Right ventricle myocardium superior (tissue), 1 donor: ENCODE measurements at regions of chr21 and their contacts with region 1.

Region 1: GRCh38 chr21:32826329-32827167 is 55.0 kb upstream of the PAXBP1 start:
- DNase-seq: no peak
- ATAC-seq: peak; percentile 90

Region 2: DNA sequence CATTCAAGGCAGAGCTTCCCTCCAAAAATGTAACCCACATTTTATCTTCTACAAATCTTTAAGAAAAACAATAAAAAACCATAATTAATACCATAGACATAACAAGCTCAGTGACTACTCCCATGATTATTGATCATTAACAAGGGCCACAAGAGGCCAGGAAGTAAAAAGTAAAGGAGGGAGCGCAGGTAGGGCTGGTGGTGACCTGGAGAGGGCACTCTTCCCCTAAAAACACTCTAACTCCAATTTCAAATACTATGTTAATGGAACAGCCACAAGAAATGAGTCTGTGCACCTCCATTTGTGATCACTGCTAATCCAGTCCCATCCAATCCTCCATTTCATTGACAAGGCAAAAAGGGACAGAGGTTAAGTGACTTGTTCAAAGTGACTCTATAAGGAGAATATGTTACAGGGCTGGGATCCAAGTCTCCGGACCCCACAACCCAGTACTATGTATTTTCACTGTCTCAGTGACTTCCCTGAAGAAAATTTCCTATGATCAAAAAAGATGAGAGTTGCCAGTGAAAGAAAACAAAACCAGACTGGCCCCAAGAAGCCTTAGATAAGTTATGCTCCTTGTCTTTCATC is 173.1 kb before region 1 on chr21:
- intact Hi-C with region 1: loop called (anchors 5 kb)
- DNase-seq: no peak
- ATAC-seq: no peak